ENCODE measurements at regions of chr16 and their contacts with region 1.

Region 1: DNA sequence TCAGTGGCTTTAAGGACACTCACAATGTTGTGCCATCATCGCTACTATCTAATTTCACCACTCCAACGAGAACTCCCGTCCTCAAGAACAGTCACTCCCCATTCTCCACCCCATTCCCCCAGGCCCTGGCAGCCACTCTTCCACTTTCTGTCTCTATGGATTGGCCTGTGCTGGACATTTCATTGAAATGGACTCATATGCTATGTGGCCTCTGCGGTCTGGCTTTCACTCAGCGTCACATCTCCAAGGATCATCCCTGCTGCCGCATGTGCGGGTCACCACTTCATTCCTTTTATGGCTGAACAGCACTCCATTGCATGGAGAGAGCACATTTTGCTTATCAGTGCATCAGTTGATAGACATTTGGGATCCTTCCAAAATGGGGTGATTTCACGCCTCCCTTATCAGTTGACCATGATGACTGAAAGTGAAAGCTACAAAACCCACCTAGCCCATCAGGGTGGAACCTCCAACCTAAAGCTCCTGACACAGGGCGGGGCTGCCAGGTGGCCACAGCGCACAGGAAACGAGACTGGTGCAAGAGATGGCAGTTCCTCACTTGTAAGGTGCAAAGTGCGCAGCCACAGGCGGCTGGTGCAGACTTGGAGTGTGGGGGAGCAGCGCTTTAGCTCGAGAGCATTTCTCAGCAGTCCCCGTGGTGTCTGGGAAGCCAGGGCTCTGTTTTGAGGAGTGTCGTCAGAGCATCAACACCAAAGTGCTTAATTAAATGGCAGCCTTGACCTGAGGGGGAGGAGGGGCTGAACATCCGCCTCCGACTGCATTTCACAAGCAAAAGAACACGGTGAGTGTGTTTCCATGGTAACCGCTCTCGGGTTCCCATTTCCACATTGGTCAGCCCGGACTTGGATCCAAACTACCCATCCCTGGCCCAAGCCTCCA is 23.8 kb downstream of the COTL1 start:
- DNase-seq: peak; percentile 82
- ATAC-seq: peak; percentile 87
- H3K4me3 Mint-ChIP-seq: peak overlapping the region; percentile 86
- H3K27ac Mint-ChIP-seq: peak overlapping the region; percentile 85
- H3K4me1 Mint-ChIP-seq: peaks cover 65% of the 10 kb centered on the region
- H3K27me3 Mint-ChIP-seq: no peaks in the 10 kb centered on the region

Region 2: GRCh38 chr16:84607694-84608093 is 13.6 kb after region 1 on chr16:
- POLR2A ChIA-PET with region 1: interaction called, 32 read pairs
- DNase-seq: no peak
- ATAC-seq: peak; percentile 55
- H3K4me3 Mint-ChIP-seq: peak overlapping the region; percentile 68
- H3K27ac Mint-ChIP-seq: peak overlapping the region; percentile 75
- H3K4me1 Mint-ChIP-seq: peaks cover 80% of the 10 kb centered on the region
- H3K27me3 Mint-ChIP-seq: no peaks in the 10 kb centered on the region